T-cell (primary cell): ENCODE measurements at regions of chr18 and their contacts with region 1.

Region 1: DNA sequence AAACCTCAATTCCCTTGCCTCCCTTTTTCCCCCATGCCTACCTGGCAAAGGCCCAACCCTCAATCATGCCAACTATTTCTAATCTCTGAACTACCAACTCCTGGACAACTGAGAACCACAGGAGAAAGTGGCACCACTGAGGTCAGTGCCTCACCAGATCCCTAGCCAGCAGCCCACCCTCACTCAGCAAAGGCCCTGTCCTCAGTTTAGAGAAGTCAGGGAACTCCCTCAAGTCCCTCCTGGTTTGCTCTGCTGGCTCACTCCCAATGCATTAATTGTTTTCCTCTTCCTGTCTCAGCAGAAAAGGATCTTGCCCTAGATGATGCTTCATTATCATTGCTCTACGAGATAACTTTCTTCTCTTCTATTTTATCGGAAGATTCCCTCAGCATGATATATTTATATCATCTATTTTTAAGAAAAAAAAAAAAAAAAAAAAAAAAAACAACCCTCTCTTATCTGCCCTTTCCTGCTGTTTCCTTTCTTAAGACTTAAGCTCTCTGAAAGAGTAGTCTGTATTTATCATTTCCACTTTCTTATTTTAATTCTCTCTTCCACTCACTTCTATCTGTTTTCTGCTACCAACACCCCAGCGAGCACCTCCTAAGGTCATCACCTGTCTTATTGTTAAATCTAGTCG is 22.7 kb upstream of the ZBTB14 start:
- DNase-seq: no peak
- ATAC-seq: no peak
- H3K4me3 ChIP-seq: no peak overlapping the region
- H3K4me3 Mint-ChIP-seq: no peak overlapping the region
- H3K27ac ChIP-seq: no peak overlapping the region
- H3K27ac Mint-ChIP-seq: no peak overlapping the region
- H3K4me1 ChIP-seq: no peaks in the 10 kb centered on the region
- H3K4me1 Mint-ChIP-seq: no peaks in the 10 kb centered on the region
- H3K27me3 ChIP-seq: peaks cover 0 to 4% of the 10 kb centered on the region in 2 experiments
- H3K27me3 Mint-ChIP-seq: no peaks in the 10 kb centered on the region

Region 2: GRCh38 chr18:5334456-5335075 is 16.4 kb after region 1 on chr18:
- CTCF ChIA-PET with region 1: interaction called in 1 of 2 experiments, 8 read pairs
- POLR2A ChIA-PET with region 1: interaction called in 1 of 2 experiments, 14 read pairs
- DNase-seq: no peak
- ATAC-seq: no peak
- H3K4me3 ChIP-seq: no peak overlapping the region
- H3K4me3 Mint-ChIP-seq: no peak overlapping the region
- H3K27ac ChIP-seq: no peak overlapping the region
- H3K27ac Mint-ChIP-seq: no peak overlapping the region
- H3K4me1 ChIP-seq: no peaks in the 10 kb centered on the region
- H3K4me1 Mint-ChIP-seq: no peaks in the 10 kb centered on the region
- H3K27me3 ChIP-seq: no peaks in the 10 kb centered on the region
- H3K27me3 Mint-ChIP-seq: peaks cover 0 to 1% of the 10 kb centered on the region in 2 donors

Region 3: GRCh38 chr18:5424903-5425664 is 106.9 kb after region 1 on chr18:
- CTCF ChIA-PET with region 1: no interaction called
- POLR2A ChIA-PET with region 1: no interaction called
- DNase-seq: peak in 7 of 35 experiments; percentile 1 to 54 (median 11)
- ATAC-seq: peak in 2 of 4 experiments; percentile 54 to 63
- H3K4me3 ChIP-seq: no peak overlapping the region
- H3K4me3 Mint-ChIP-seq: no peak overlapping the region
- H3K27ac ChIP-seq: no peak overlapping the region
- H3K27ac Mint-ChIP-seq: no peak overlapping the region
- H3K4me1 ChIP-seq: no peaks in the 10 kb centered on the region
- H3K4me1 Mint-ChIP-seq: no peaks in the 10 kb centered on the region
- H3K27me3 ChIP-seq: no peaks in the 10 kb centered on the region
- H3K27me3 Mint-ChIP-seq: peaks cover 0 to 7% of the 10 kb centered on the region in 2 donors